OCI-LY7 (cell line): ENCODE measurements at regions of chr2 and their contacts with region 1.

Region 1: GRCh38 chr2:101770726-101771125 is 73.2 kb downstream of the MAP4K4 start:
- DNase-seq: peak; percentile 68
- H3K4me3 ChIP-seq: no peak overlapping the region
- H3K27ac ChIP-seq: no peak overlapping the region
- H3K4me1 ChIP-seq: peaks cover 53% of the 10 kb centered on the region
- CTCF ChIP-seq: peak; percentile 87

Region 2: GRCh38 chr2:101751875-101752619 is 18.7 kb before region 1 on chr2:
- CTCF ChIA-PET with region 1: no interaction called
- POLR2A ChIA-PET with region 1: interaction called, 16 read pairs
- intact Hi-C with region 1: no loop called
- DNase-seq: peak; percentile 78
- H3K4me3 ChIP-seq: peak overlapping the region; percentile 54
- H3K27ac ChIP-seq: peak overlapping the region; percentile 91
- H3K4me1 ChIP-seq: peaks cover 66% of the 10 kb centered on the region
- CTCF ChIP-seq: no peak

Region 3: GRCh38 chr2:102748107-102748506 is 977.4 kb after region 1 on chr2:
- CTCF ChIA-PET with region 1: no interaction called
- POLR2A ChIA-PET with region 1: no interaction called
- intact Hi-C with region 1: no loop called
- DNase-seq: no peak
- H3K4me3 ChIP-seq: no peak overlapping the region
- H3K27ac ChIP-seq: no peak overlapping the region
- H3K4me1 ChIP-seq: no peaks in the 10 kb centered on the region
- CTCF ChIP-seq: no peak